MCF 10A (cell line): ENCODE measurements at regions of chr1 and their contacts with region 1.

Region 1: GRCh38 chr1:197356723-197357533 is 88.9 kb downstream of the CRB1 start:
- DNase-seq: peak; percentile 76
- H3K4me3 Mint-ChIP-seq: no peak overlapping the region
- H3K27ac Mint-ChIP-seq: no peak overlapping the region
- H3K4me1 Mint-ChIP-seq: no peaks in the 10 kb centered on the region
- H3K27me3 Mint-ChIP-seq: no peaks in the 10 kb centered on the region
- CTCF ChIP-seq: peak; percentile 88

Region 2: DNA sequence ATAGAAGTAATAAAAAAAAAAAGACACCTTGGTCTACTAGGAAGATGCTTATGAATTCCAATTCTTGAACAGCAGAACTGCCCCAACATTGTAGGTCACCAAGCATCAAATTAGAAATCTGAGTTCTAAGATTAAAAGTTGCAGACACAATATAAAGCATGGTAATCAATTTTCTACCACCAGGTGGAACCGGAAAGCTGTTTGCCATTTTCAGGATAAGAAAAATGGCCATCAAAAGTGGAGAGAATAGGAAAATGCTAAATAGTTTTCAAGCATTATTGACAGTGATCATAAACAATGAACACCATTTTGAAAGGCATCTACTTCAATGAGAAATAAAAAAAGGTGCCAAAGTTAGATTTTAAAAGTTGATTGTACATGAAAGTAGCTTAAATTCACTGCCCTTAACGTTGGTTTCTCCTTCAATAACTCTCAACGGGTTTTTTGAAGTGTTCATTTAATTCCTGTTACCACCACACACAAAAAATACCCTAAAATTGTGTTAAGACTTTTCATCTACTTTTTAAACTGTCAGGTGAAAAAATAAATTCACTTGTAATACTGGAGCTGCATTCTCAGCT is 1001.6 kb before region 1 on chr1:
- CTCF ChIA-PET with region 1: no interaction called
- POLR2A ChIA-PET with region 1: no interaction called
- intact Hi-C with region 1: loop called (anchors 10 kb)
- DNase-seq: peak; percentile 62
- H3K4me3 Mint-ChIP-seq: no peak overlapping the region
- H3K27ac Mint-ChIP-seq: no peak overlapping the region
- H3K4me1 Mint-ChIP-seq: no peaks in the 10 kb centered on the region
- H3K27me3 Mint-ChIP-seq: no peaks in the 10 kb centered on the region
- CTCF ChIP-seq: peak; percentile 79

Region 3: DNA sequence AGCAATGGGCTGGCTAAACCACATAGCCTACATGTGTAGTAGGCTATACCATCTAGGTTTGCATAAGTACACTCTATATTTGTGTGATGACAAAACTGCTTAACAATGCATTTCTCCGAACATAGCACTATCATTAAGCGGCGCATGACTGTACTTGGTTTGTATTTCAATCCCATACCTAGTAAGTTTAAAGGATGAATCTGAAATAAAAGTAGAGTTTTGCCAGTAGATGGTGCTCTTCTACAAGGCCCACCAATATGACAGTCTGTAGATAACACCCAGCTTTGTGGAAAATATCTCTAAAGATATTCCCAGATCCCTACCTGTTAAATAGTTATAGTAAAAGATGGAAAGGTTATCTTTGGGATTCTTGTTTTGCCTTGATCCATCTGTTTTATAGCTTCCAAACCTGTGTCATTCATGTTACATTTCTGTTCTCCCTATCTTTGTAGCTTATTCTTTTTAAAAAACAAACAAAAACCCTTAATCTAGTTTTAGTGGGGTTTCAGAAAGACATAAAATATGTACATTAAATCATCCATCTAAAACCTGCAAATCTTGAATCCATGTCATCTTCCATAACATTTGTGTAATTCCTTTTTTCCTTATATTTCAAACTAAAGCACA is 176.6 kb before region 1 on chr1:
- CTCF ChIA-PET with region 1: interaction called, 61 read pairs
- POLR2A ChIA-PET with region 1: interaction called, 4 read pairs
- intact Hi-C with region 1: loop called (anchors 1 kb)
- DNase-seq: peak; percentile 64
- H3K4me3 Mint-ChIP-seq: no peak overlapping the region
- H3K27ac Mint-ChIP-seq: no peak overlapping the region
- H3K4me1 Mint-ChIP-seq: no peaks in the 10 kb centered on the region
- H3K27me3 Mint-ChIP-seq: no peaks in the 10 kb centered on the region
- CTCF ChIP-seq: peak; percentile 62

Region 4: DNA sequence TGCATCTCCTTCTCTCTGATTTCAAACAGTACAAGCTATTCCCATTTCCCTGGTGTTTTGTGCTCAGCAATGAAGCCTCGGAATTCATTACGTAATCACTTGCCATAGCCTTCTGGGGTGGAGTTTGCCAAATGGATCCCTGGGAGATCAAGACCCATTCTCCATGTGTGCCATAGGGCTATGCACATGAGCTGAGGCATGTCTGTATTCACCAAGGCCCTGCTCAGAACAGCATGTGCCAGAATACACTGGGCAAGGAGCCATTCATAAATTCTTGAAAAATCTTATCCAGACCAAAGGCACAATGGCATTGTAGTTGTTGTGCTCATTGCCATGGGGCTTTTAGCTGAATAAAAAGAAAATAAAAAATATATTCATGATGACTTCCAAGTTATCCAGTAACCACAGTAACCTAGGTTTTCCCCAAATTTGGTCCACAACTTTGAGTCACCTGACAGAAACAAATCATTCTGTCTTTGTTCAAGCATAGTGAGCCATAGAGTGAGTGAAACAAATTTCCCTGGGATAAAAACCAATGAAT is 35.9 kb before region 1 on chr1:
- CTCF ChIA-PET with region 1: interaction called, 81 read pairs
- POLR2A ChIA-PET with region 1: no interaction called
- intact Hi-C with region 1: no loop called
- DNase-seq: peak; percentile 38
- H3K4me3 Mint-ChIP-seq: no peak overlapping the region
- H3K27ac Mint-ChIP-seq: peak overlapping the region; percentile 77
- H3K4me1 Mint-ChIP-seq: peaks cover 13% of the 10 kb centered on the region
- H3K27me3 Mint-ChIP-seq: no peaks in the 10 kb centered on the region
- CTCF ChIP-seq: no peak

Region 5: DNA sequence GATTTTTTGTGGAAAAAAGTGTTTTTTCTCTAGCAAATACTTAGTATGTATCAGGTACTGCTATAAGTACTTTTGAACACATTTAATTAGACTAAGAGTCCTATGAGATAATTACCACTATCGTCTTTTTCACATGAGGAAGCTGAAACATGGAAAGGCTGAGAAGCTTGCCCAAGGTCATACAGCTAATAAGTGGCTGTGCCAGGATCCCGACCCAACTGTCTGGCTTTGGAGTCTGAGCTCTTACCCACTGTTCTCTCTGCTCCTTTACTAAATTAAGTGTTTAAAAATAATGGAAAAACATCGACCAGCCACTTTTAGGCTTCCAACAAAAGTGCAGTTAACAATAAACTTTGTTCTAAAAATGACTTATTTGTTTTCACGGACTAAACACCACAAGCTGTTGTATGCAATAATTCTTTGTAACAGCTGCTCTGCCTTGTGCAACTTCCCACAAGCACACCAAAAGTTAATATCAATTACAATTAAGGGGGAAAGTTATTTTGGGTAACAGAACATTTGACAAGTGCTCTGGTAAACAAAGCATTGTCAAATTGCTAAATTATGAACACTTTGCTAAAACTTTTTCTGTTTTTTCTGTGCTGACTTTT is 13.2 kb before region 1 on chr1:
- CTCF ChIA-PET with region 1: interaction called, 15 read pairs
- POLR2A ChIA-PET with region 1: no interaction called
- intact Hi-C with region 1: no loop called
- DNase-seq: no peak
- H3K4me3 Mint-ChIP-seq: no peak overlapping the region
- H3K27ac Mint-ChIP-seq: no peak overlapping the region
- H3K4me1 Mint-ChIP-seq: no peaks in the 10 kb centered on the region
- H3K27me3 Mint-ChIP-seq: no peaks in the 10 kb centered on the region
- CTCF ChIP-seq: no peak